Natural killer cell (primary cell): ENCODE measurements at regions of chr1 and their contacts with region 1.

Region 1: DNA sequence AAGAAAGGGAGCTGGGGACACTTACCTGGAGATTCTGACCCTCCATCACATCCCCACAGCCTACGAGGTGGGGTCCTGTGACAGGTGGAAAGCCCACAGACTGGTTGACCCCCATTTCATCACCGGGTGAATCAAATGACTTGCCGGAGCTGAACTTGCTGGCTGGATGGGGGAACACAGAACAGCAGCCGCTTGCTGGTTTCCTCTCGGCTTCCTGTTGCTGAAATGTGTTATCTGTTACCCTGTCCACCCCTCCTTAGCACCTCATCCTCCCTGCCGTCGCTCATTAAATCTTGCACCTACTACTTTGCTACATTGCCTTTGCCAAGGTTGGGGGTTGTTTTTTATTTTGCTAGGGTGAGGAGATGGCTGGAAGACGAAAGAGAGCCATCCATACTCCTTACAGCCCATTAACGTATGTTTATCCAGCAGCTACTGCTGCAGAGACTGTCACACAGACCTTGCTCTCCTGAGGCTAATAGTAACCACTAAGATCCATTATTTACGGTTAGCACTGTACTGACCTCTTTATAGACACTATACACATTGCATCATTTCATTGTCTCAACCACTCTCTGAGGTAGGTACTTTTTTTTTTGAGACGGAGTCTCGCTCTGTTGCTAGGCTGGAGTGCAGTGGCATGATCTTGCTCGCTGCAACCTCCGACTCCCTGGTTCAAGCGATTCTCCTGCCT is 7.0 kb downstream of the PAFAH2 start:
- DNase-seq: peak; percentile 74 to 75
- ATAC-seq: peak; percentile 87 to 96 (median 88)
- H3K4me3 ChIP-seq: peak overlapping the region; percentile 59
- H3K4me3 Mint-ChIP-seq: peak overlapping the region; percentile 97
- H3K27ac ChIP-seq: peak overlapping the region; percentile 84
- H3K27ac Mint-ChIP-seq: peak overlapping the region; percentile 89 to 98
- H3K4me1 ChIP-seq: peaks cover 72% of the 10 kb centered on the region
- H3K4me1 Mint-ChIP-seq: peaks cover 73 to 82% of the 10 kb centered on the region in 2 donors
- H3K27me3 ChIP-seq: no peaks in the 10 kb centered on the region
- H3K27me3 Mint-ChIP-seq: no peaks in the 10 kb centered on the region
- CTCF ChIP-seq: no peak

Region 2: DNA sequence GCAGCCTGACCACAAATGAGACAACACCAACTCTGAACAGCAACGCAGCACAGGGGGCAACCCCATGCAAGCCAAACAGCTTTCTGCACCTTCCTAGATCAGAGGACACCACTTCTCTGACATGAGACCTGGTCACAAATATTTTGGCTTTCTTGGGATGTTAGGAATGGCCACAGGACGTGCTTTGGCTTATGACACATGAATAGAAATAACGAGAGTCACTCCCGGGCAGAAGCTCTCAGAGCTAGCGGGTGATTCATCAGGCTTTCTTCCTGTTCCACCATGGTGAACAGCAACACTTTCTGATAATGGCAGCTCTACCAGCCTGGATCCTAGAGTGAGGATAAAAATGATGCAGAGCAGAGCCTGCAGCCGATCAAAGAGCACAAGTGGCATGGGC is 32.4 kb before region 1 on chr1:
- intact Hi-C with region 1: loop called (anchors 5 kb)
- DNase-seq: no peak
- ATAC-seq: no peak
- H3K4me3 ChIP-seq: no peak overlapping the region
- H3K4me3 Mint-ChIP-seq: no peak overlapping the region
- H3K27ac ChIP-seq: no peak overlapping the region
- H3K27ac Mint-ChIP-seq: peak overlapping the region; percentile 69 to 73
- H3K4me1 ChIP-seq: no peaks in the 10 kb centered on the region
- H3K4me1 Mint-ChIP-seq: peaks cover 30 to 53% of the 10 kb centered on the region in 2 donors
- H3K27me3 ChIP-seq: no peaks in the 10 kb centered on the region
- H3K27me3 Mint-ChIP-seq: no peaks in the 10 kb centered on the region
- CTCF ChIP-seq: no peak

Region 3: DNA sequence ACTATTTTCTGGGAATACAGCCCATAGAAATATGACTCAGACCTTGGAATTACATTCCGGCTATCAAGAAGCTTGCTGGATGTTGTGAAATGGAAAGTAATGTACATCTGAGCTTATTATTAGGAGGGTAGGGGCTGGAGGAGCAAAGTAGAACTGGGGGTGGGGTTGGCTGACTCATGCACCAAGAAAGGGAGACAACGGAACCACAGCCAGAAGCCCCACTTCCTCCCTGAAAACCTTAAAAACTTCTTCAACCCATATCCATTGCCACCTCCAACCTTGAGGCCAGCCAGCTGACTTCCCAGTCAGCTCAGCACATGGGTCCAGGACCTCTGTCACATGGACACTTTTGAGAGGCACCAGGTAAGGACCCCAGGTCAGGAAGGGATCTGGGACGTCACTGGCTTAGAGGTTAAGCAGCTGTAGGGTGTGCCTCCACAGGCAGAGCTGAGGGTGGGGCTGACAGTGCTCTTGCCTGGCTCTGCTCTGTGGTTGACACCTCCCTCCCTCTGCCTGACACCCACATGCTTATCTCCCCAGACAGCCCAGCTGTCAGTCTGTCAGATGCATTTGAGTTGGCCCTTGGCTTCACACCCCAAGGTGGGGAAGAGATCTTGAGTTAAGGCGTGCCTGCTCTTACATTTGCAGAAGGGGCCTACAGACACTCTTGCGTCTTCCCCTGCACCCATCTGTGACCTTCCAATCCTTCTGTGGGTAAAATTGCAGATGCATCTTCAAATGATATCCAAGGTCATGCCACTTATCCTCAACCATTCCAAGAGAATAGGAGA is 387.4 kb after region 1 on chr1:
- intact Hi-C with region 1: loop called (anchors 5 kb)
- DNase-seq: peak; percentile 85 to 93
- ATAC-seq: peak; percentile 89 to 97 (median 93)
- H3K4me3 ChIP-seq: peak overlapping the region; percentile 0
- H3K4me3 Mint-ChIP-seq: peak overlapping the region; percentile 92
- H3K27ac ChIP-seq: peak overlapping the region; percentile 69
- H3K27ac Mint-ChIP-seq: peak overlapping the region; percentile 82 to 93
- H3K4me1 ChIP-seq: peaks cover 64% of the 10 kb centered on the region
- H3K4me1 Mint-ChIP-seq: peaks cover 62 to 68% of the 10 kb centered on the region in 2 donors
- H3K27me3 ChIP-seq: no peaks in the 10 kb centered on the region
- H3K27me3 Mint-ChIP-seq: peaks cover 6% of the 10 kb centered on the region in 2 donors
- CTCF ChIP-seq: no peak